CD8-positive, alpha-beta memory T cell (primary cell): ENCODE measurements at regions of chr9 and their contacts with region 1.

Region 1: GRCh38 chr9:15135164-15135792 is 171.7 kb downstream of the TTC39B start:
- DNase-seq: peak in 4 of 5 donors; percentile 5 to 52 (median 40)
- H3K4me3 ChIP-seq: no peak overlapping the region
- H3K4me3 Mint-ChIP-seq: no peak overlapping the region
- H3K27ac ChIP-seq: no peak overlapping the region
- H3K27ac Mint-ChIP-seq: no peak overlapping the region
- H3K4me1 ChIP-seq: peaks cover 6% of the 10 kb centered on the region
- H3K4me1 Mint-ChIP-seq: peaks cover 5% of the 10 kb centered on the region in 3 donors
- H3K27me3 ChIP-seq: no peaks in the 10 kb centered on the region
- H3K27me3 Mint-ChIP-seq: peaks cover 8% of the 10 kb centered on the region in 2 donors

Region 2: GRCh38 chr9:15146268-15146700 is 11.0 kb after region 1 on chr9:
- CTCF ChIA-PET with region 1: interaction called, 5 read pairs
- POLR2A ChIA-PET with region 1: interaction called, 14 read pairs
- DNase-seq: no peak
- H3K4me3 ChIP-seq: no peak overlapping the region
- H3K4me3 Mint-ChIP-seq: no peak overlapping the region
- H3K27ac ChIP-seq: no peak overlapping the region
- H3K27ac Mint-ChIP-seq: no peak overlapping the region
- H3K4me1 ChIP-seq: peaks cover 4% of the 10 kb centered on the region
- H3K4me1 Mint-ChIP-seq: peaks cover 0 to 10% (median 7%) of the 10 kb centered on the region in 3 donors
- H3K27me3 ChIP-seq: no peaks in the 10 kb centered on the region
- H3K27me3 Mint-ChIP-seq: peaks cover 3 to 26% of the 10 kb centered on the region in 2 donors

Region 3: GRCh38 chr9:15161753-15162152 is 26.5 kb after region 1 on chr9:
- CTCF ChIA-PET with region 1: interaction called, 4 read pairs
- POLR2A ChIA-PET with region 1: interaction called, 12 read pairs
- DNase-seq: no peak
- H3K4me3 ChIP-seq: no peak overlapping the region
- H3K4me3 Mint-ChIP-seq: no peak overlapping the region
- H3K27ac ChIP-seq: no peak overlapping the region
- H3K27ac Mint-ChIP-seq: no peak overlapping the region
- H3K4me1 ChIP-seq: no peaks in the 10 kb centered on the region
- H3K4me1 Mint-ChIP-seq: peaks cover 0 to 4% (median 4%) of the 10 kb centered on the region in 3 donors
- H3K27me3 ChIP-seq: no peaks in the 10 kb centered on the region
- H3K27me3 Mint-ChIP-seq: no peaks in the 10 kb centered on the region